ENCODE measurements at regions of chr9 and their contacts with region 1.

Region 1: GRCh38 chr9:5886114-5886939 is 4.4 kb upstream of the MLANA start:
- DNase-seq: peak; percentile 92
- H3K4me3 Mint-ChIP-seq: no peak overlapping the region
- H3K27ac Mint-ChIP-seq: no peak overlapping the region
- H3K4me1 Mint-ChIP-seq: no peaks in the 10 kb centered on the region
- H3K27me3 Mint-ChIP-seq: no peaks in the 10 kb centered on the region

Region 2: DNA sequence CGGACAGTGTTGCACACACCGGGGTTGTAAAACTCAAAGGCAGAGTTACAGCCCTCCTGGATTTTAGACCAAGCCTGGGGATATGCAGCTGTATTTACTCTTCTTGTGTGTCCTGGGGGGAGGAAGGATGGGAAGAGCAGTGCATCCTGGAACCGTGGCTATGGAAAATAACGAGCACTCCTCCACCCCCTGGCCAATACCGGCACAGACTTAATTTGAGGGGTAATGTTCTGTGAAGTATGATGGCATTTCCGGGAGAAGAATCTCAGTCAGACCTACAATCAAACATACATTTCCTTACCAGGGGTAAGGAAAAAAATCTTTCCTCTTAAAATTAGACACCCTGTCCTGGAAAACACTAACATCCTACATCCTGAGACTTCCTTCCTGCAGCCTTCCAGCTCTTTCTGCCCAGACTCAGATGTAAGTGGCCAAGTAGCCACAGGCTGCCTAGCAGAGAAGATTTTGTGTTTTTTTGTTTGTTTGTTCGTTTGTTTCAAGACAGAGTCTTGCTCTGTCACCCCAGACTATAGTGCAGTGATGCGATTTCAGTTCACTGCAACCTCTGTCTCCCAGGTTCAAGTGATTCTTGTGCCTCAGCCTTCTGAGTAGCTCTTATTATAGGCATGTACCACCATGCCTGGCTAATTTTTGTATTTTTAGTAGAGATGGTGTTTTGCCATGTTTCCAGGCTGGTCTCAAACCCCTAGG is 42.4 kb before region 1 on chr9:
- CTCF ChIA-PET with region 1: interaction called, 12 read pairs
- intact Hi-C with region 1: no loop called
- DNase-seq: peak; percentile 39
- H3K4me3 Mint-ChIP-seq: peak overlapping the region; percentile 33
- H3K27ac Mint-ChIP-seq: peak overlapping the region; percentile 74
- H3K4me1 Mint-ChIP-seq: peaks cover 57% of the 10 kb centered on the region
- H3K27me3 Mint-ChIP-seq: no peaks in the 10 kb centered on the region

Region 3: GRCh38 chr9:5899292-5899691 is 13.0 kb after region 1 on chr9:
- CTCF ChIA-PET with region 1: interaction called, 61 read pairs
- intact Hi-C with region 1: no loop called
- DNase-seq: no peak
- H3K4me3 Mint-ChIP-seq: no peak overlapping the region
- H3K27ac Mint-ChIP-seq: peak overlapping the region; percentile 59
- H3K4me1 Mint-ChIP-seq: peaks cover 37% of the 10 kb centered on the region
- H3K27me3 Mint-ChIP-seq: no peaks in the 10 kb centered on the region

Region 4: DNA sequence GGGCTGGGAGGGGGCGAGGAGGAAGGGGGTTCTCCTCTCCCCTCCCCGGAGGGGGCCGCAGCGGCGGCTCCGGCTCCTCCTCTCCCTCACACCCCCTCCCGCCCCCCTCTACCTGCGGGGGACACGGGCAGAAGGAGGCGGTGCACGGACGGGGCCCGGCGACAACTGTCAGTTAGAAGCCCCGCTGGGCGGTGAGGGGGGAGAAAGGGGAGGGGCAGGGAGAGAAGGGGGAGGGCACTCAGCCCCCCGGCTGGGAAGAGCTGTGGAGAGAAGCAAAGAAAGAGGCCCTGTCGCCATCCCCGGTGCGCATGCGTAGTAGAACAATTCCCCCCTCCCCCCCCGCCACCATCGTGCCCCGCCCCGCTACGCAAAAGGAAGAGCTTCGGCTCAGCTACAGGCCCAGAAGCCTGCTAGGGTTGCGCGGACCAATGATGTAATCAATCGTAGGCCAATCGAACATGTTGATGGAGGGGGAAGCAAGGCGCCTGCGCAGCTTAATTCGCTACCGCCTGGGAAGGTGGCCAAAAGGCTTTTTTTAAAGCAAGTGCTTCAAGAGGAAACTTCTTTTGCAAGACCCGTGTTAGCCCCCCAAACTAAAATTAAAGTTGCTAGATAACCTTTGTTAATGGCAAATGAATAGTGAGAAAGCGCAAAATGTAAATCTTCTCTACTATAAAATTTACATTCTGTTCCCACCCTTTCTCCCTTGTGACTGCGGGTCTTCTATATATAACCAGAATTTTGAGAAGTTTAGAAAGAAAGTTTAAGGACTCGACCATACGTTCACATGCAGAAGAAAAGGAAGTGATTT is 122.0 kb after region 1 on chr9:
- CTCF ChIA-PET with region 1: interaction called, 22 read pairs
- intact Hi-C with region 1: loop called (anchors 1 kb)
- DNase-seq: peak; percentile 98
- H3K4me3 Mint-ChIP-seq: peak overlapping the region; percentile 76
- H3K27ac Mint-ChIP-seq: peak overlapping the region; percentile 82
- H3K4me1 Mint-ChIP-seq: peaks cover 61% of the 10 kb centered on the region
- H3K27me3 Mint-ChIP-seq: no peaks in the 10 kb centered on the region

Region 5: DNA sequence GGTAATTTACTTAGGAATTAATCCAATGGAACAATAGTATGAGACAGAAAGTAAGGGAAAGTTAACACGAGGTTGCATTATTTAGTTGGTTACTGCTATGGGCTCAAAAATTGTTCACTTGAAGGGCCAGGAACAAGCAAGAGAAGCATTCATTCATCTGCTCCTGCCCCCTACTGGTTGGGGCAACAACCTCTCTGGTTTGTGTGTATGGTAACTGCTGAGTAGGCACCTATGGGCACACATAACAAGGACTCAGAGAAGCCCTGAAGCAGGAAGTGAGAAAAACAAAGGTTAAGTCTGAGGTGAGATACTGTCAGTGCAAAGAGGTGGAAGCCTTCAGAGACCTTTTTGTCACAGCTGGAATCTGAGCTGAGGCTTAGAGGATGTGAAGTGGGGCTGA is 163.5 kb after region 1 on chr9:
- CTCF ChIA-PET with region 1: interaction called, 144 read pairs
- intact Hi-C with region 1: loop called (anchors 1 kb)
- DNase-seq: peak; percentile 77
- H3K4me3 Mint-ChIP-seq: no peak overlapping the region
- H3K27ac Mint-ChIP-seq: no peak overlapping the region
- H3K4me1 Mint-ChIP-seq: peaks cover 11% of the 10 kb centered on the region
- H3K27me3 Mint-ChIP-seq: peaks cover 3% of the 10 kb centered on the region

Region 6: DNA sequence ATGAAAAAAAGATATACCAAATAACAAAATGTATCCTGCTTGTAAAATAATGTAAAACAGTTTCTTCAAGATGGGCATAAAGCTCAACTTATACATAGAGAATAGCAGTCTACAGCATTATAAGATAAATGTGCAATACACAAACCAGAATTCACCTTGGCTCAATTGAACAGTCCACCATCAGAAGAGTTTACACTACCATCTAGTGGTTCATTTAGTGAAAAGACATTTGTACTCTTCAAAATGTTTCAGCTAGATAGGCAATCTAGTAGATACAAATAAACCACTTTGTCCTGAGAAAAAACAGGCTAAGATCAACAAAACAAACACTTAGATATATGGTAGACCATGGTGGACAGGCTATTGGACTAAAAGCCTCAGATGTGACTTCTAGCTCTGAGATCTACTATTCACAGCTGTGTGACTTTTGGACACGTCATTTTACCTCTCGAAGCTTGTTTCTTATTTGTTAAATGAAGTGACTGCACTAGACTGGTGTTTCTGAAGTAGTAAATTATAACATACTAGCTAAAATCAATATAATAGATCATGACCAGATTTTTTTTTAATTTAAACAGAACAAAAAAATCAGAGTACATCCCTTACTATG is 419.7 kb after region 1 on chr9:
- CTCF ChIA-PET with region 1: interaction called, 10 read pairs
- intact Hi-C with region 1: loop called (anchors 1 kb)
- DNase-seq: no peak
- H3K4me3 Mint-ChIP-seq: no peak overlapping the region
- H3K27ac Mint-ChIP-seq: no peak overlapping the region
- H3K4me1 Mint-ChIP-seq: no peaks in the 10 kb centered on the region
- H3K27me3 Mint-ChIP-seq: no peaks in the 10 kb centered on the region